Adrenal gland (tissue), 19 donors: ENCODE measurements at regions of chr9 and their contacts with region 1.

Region 1: DNA sequence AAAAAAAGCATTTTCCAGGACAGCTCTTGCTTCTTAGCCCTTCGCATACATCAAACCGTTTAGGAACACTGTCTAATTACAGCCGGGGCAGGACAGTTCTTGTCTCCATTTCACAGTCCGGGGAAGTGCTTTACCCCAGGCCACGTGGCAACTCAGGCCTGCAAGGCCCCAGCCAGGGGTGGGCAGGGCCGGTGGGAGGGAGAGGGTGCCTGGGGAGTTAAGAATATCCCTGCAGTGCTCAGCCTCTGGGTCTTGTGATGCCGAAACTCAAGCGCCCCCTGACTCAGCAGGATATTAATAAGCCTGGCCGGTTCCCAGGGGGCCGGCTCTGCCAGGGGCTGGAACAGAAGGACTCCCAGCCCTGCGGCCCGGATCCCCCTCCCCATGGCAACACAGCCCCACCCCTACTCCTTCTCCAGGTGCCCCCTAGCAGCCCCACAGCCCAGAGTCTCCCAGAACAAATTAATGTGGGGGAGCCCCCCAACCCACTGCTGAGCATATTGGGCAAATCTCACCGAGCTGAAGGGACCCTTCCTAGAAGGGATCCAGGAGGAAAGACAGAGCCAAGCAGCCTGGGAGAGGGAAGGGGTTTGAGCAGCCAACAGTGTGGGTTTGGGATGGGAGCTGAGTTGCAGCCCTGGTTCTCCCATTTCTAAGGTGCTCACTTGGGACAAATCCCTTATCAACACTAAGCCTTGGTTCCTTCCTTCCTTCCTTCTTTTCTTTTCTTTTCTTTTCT is 45.3 kb downstream of the PLPP7 start:
- DNase-seq: no peak
- H3K4me3 ChIP-seq: no peak overlapping the region
- H3K27ac ChIP-seq: no peak overlapping the region
- H3K4me1 ChIP-seq: no peaks in the 10 kb centered on the region
- H3K27me3 ChIP-seq: no peaks in the 10 kb centered on the region
- CTCF ChIP-seq: no peak
- POLR2A ChIP-seq: no peak

Region 2: DNA sequence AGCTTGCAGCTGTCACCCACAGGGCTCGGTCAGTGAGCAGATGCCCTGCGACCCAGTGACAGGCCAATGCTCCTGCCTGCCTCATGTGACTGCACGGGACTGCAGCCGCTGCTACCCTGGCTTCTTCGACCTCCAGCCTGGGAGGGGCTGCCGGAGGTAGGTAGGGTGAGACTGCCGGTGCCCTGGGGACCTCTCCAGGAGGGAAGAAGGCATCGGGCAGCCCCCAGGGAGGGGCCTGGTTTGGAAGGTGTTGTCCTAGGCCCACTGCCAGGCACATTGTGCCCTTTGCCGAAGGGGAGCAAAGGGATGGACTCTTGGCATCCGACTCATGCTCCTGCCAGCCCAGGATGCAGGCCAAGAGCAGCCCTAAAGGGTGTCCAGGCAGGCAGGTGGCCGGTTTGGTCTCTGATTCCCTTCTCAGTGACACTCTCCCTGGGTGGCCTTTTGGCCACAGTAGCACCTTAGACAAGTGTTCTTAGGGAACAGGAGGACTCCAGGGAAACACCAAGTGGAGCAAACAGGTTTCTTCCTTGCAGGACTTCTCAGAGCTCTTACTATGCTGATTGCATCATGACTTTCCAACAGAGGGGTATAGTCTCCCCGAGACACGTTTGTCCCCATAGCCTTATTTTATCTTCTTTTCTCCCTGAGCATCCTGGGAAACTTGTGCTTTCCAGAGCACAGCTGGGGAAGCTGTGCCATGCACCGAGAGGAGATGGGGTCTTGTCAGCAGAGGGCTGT is 266.6 kb before region 1 on chr9:
- intact Hi-C with region 1: loop called in 1 of 2 experiments (anchors 10 kb)
- DNase-seq: no peak
- H3K4me3 ChIP-seq: no peak overlapping the region
- H3K27ac ChIP-seq: no peak overlapping the region
- H3K4me1 ChIP-seq: no peaks in the 10 kb centered on the region
- H3K27me3 ChIP-seq: no peaks in the 10 kb centered on the region
- CTCF ChIP-seq: no peak
- POLR2A ChIP-seq: no peak

Region 3: DNA sequence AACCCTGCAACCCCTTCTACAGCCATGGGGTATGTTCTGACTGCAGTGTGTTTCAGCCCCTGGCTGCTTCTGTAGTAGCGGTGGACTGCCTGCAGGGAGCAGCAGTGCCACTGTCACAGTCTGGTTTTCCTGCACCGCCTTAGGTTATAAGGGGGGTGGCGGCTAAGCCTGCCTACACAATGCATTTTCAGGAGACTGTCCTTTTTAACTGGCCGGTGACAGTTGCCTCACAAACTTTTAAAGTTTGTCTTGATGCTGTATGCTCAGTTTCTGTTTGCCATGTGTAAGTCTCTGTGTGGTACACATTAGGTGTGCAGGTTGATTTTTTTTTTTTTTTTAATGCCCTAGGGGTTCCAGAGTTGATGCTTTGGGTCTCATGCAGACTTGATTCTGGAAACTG is 156.4 kb before region 1 on chr9:
- intact Hi-C with region 1: loop called (anchors 2 to 5 kb)
- DNase-seq: peak; percentile 55 to 82 (median 65)
- H3K4me3 ChIP-seq: no peak overlapping the region
- H3K27ac ChIP-seq: no peak overlapping the region
- H3K4me1 ChIP-seq: no peaks in the 10 kb centered on the region
- H3K27me3 ChIP-seq: no peaks in the 10 kb centered on the region
- CTCF ChIP-seq: peak; percentile 78 to 93 (median 89)
- POLR2A ChIP-seq: no peak